ENCODE measurements at regions of chr2 and their contacts with region 1.

Region 1: GRCh38 chr2:172102391-172103278 is at the start of gene DLX2:
- DNase-seq: peak in 5 of 9 donors; percentile 23 to 43 (median 32)
- ATAC-seq: peak; percentile 61
- H3K4me3 ChIP-seq: peak within 1 kb of the TSS; percentile 32
- H3K4me3 Mint-ChIP-seq: peak within 1 kb of the TSS; percentile 74 to 88 (median 82)
- H3K27ac ChIP-seq: no peak within 1 kb of the TSS
- H3K27ac Mint-ChIP-seq: peak within 1 kb of the TSS in 8 of 9 donors; percentile 11 to 89 (median 80)
- H3K4me1 ChIP-seq: peaks cover 41 to 62% of the 10 kb centered on the region in 2 donors
- H3K4me1 Mint-ChIP-seq: peaks cover 29 to 59% (median 49%) of the 10 kb centered on the region in 7 donors
- H3K27me3 ChIP-seq: peaks cover 48 to 83% of the 10 kb centered on the region in 2 donors
- H3K27me3 Mint-ChIP-seq: peaks cover 65 to 91% (median 70%) of the 10 kb centered on the region in 5 donors
- total RNA-seq, gene DLX2: 0.16 to 0.34 TPM in 2 of 5 experiments, not detected in the others

Region 2: GRCh38 chr2:171598713-171599319 is 503.8 kb before region 1 on chr2:
- CTCF ChIA-PET with region 1: interaction called, 4 read pairs
- POLR2A ChIA-PET with region 1: no interaction called
- intact Hi-C with region 1: loop called in 1 of 2 experiments (anchors 5 kb)
- DNase-seq: peak in 7 of 9 donors; percentile 22 to 64 (median 51)
- ATAC-seq: peak; percentile 94
- H3K4me3 ChIP-seq: no peak overlapping the region
- H3K4me3 Mint-ChIP-seq: no peak overlapping the region
- H3K27ac ChIP-seq: no peak overlapping the region
- H3K27ac Mint-ChIP-seq: no peak overlapping the region
- H3K4me1 ChIP-seq: peaks cover 0 to 3% of the 10 kb centered on the region in 2 donors
- H3K4me1 Mint-ChIP-seq: peaks cover 0 to 6% (median 0%) of the 10 kb centered on the region in 7 donors
- H3K27me3 ChIP-seq: no peaks in the 10 kb centered on the region
- H3K27me3 Mint-ChIP-seq: peaks cover 0 to 25% (median 4%) of the 10 kb centered on the region in 5 donors

Region 3: DNA sequence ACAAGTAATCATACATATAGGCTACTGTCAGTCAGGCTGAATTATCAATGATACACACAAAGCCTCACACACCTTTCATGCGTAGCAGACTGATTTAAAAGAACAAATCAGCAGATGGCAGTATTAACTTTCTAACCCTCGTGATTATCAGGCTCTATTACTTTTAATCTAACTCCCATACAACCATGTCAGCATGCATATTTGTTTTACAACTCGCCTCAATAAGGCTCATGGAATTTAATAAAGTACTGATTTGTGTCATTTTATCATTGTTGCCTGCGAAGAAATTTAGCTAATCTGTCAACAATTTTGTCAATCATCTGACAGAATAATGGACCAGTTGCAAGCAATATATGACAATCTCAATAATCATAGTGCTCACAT is 291.4 kb before region 1 on chr2:
- CTCF ChIA-PET with region 1: interaction called, 4 read pairs
- POLR2A ChIA-PET with region 1: no interaction called
- intact Hi-C with region 1: loop called (anchors 1 kb)
- DNase-seq: peak in 4 of 9 donors; percentile 3 to 28 (median 14)
- ATAC-seq: no peak
- H3K4me3 ChIP-seq: no peak overlapping the region
- H3K4me3 Mint-ChIP-seq: no peak overlapping the region
- H3K27ac ChIP-seq: no peak overlapping the region
- H3K27ac Mint-ChIP-seq: no peak overlapping the region
- H3K4me1 ChIP-seq: no peaks in the 10 kb centered on the region
- H3K4me1 Mint-ChIP-seq: no peaks in the 10 kb centered on the region
- H3K27me3 ChIP-seq: no peaks in the 10 kb centered on the region
- H3K27me3 Mint-ChIP-seq: no peaks in the 10 kb centered on the region

Region 4: DNA sequence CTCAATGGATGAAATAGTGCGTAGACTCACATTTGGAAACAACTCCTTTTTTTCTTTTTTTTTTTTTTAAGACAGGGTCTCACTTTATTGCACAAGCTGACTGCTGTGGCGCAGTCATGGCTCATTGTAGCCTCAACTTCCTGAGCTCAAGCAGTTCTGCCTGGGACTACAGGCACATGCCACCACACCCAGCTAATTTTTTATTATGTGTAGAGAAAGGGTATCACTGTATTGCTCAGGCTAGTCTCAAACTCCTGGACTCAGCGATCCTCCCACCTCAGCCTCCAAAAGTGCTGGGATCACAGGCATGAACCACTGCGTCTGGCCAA is 162.9 kb before region 1 on chr2:
- CTCF ChIA-PET with region 1: no interaction called
- POLR2A ChIA-PET with region 1: no interaction called
- intact Hi-C with region 1: loop called in 1 of 2 experiments (anchors 5 kb)
- DNase-seq: no peak
- ATAC-seq: peak; percentile 64
- H3K4me3 ChIP-seq: no peak overlapping the region
- H3K4me3 Mint-ChIP-seq: no peak overlapping the region
- H3K27ac ChIP-seq: no peak overlapping the region
- H3K27ac Mint-ChIP-seq: no peak overlapping the region
- H3K4me1 ChIP-seq: no peaks in the 10 kb centered on the region
- H3K4me1 Mint-ChIP-seq: peaks cover 23 to 63% (median 38%) of the 10 kb centered on the region in 7 donors
- H3K27me3 ChIP-seq: no peaks in the 10 kb centered on the region
- H3K27me3 Mint-ChIP-seq: no peaks in the 10 kb centered on the region

Region 5: GRCh38 chr2:172084734-172085459 is 17.7 kb before region 1 on chr2:
- CTCF ChIA-PET with region 1: interaction called, 5 read pairs
- POLR2A ChIA-PET with region 1: interaction called, 12 read pairs
- intact Hi-C with region 1: loop called (anchors 1 kb)
- DNase-seq: peak in 5 of 9 donors; percentile 37 to 57 (median 52)
- ATAC-seq: peak; percentile 81
- H3K4me3 ChIP-seq: peak overlapping the region; percentile 15
- H3K4me3 Mint-ChIP-seq: peak overlapping the region; percentile 70 to 85 (median 78)
- H3K27ac ChIP-seq: no peak overlapping the region
- H3K27ac Mint-ChIP-seq: peak overlapping the region in 8 of 9 donors; percentile 14 to 91 (median 84)
- H3K4me1 ChIP-seq: peaks cover 50 to 51% of the 10 kb centered on the region in 2 donors
- H3K4me1 Mint-ChIP-seq: peaks cover 36 to 74% (median 58%) of the 10 kb centered on the region in 7 donors
- H3K27me3 ChIP-seq: peaks cover 81 to 96% of the 10 kb centered on the region in 2 donors
- H3K27me3 Mint-ChIP-seq: peaks cover 80 to 98% (median 88%) of the 10 kb centered on the region in 5 donors

Measured in naive thymus-derived CD4-positive, alpha-beta T cell (primary cell).